Activated B cell treated with CpG ODN at 0.5 μM for 24 hours (primary cell): ENCODE measurements at regions of chr14 and their contacts with region 1.

Region 1: GRCh38 chr14:91244501-91244901 is at the start of gene GPR68:
- DNase-seq: no peak
- ATAC-seq: no peak
- H3K4me3 Mint-ChIP-seq: peak within 1 kb of the TSS; percentile 75
- H3K27ac Mint-ChIP-seq: peak within 1 kb of the TSS; percentile 91
- H3K4me1 Mint-ChIP-seq: peaks cover 61% of the 10 kb centered on the region
- H3K27me3 Mint-ChIP-seq: no peaks in the 10 kb centered on the region
- CTCF ChIP-seq: no peak
- total RNA-seq, gene GPR68: 1.4 and 1.8 TPM in 2 replicates

Region 2: DNA sequence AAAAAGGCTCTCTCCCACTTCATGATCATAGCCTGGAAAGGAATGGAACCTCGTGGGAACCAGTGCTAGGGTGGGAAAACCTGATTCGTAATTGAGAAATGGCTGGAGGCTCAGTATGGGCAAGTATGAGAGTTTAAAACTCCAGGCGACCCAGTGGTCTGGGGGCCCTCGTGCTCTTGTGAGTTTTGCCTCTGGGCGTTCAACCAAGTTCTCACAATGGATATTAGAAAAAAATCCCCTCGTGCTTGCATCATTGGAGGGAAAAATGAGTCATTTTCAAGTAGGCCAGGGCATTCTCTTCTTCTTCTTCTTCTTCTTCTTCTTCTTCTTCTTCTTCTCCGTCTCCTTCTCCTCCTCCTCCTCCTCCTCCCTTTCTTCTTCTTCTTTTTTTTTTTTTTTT is 39.0 kb before region 1 on chr14:
- CTCF ChIA-PET with region 1: no interaction called
- POLR2A ChIA-PET with region 1: no interaction called
- intact Hi-C with region 1: loop called (anchors 5 kb)
- DNase-seq: no peak
- ATAC-seq: no peak
- H3K4me3 Mint-ChIP-seq: no peak overlapping the region
- H3K27ac Mint-ChIP-seq: peak overlapping the region; percentile 37
- H3K4me1 Mint-ChIP-seq: peaks cover 2% of the 10 kb centered on the region
- H3K27me3 Mint-ChIP-seq: no peaks in the 10 kb centered on the region
- CTCF ChIP-seq: no peak

Region 3: GRCh38 chr14:91258011-91258618 is 13.6 kb after region 1 on chr14:
- CTCF ChIA-PET with region 1: interaction called, 4 read pairs
- POLR2A ChIA-PET with region 1: interaction called, 25 read pairs
- intact Hi-C with region 1: loop called (anchors 1 kb)
- DNase-seq: no peak
- ATAC-seq: no peak
- H3K4me3 Mint-ChIP-seq: no peak overlapping the region
- H3K27ac Mint-ChIP-seq: no peak overlapping the region
- H3K4me1 Mint-ChIP-seq: peaks cover 16% of the 10 kb centered on the region
- H3K27me3 Mint-ChIP-seq: no peaks in the 10 kb centered on the region
- CTCF ChIP-seq: no peak

Region 4: GRCh38 chr14:91317381-91318308 is 73.1 kb after region 1 on chr14:
- CTCF ChIA-PET with region 1: no interaction called
- POLR2A ChIA-PET with region 1: interaction called, 9 read pairs
- intact Hi-C with region 1: loop called (anchors 2 kb)
- DNase-seq: peak; percentile 62
- ATAC-seq: peak; percentile 32
- H3K4me3 Mint-ChIP-seq: peak overlapping the region; percentile 70
- H3K27ac Mint-ChIP-seq: peak overlapping the region; percentile 98
- H3K4me1 Mint-ChIP-seq: peaks cover 78% of the 10 kb centered on the region
- H3K27me3 Mint-ChIP-seq: no peaks in the 10 kb centered on the region
- CTCF ChIP-seq: no peak

Region 5: DNA sequence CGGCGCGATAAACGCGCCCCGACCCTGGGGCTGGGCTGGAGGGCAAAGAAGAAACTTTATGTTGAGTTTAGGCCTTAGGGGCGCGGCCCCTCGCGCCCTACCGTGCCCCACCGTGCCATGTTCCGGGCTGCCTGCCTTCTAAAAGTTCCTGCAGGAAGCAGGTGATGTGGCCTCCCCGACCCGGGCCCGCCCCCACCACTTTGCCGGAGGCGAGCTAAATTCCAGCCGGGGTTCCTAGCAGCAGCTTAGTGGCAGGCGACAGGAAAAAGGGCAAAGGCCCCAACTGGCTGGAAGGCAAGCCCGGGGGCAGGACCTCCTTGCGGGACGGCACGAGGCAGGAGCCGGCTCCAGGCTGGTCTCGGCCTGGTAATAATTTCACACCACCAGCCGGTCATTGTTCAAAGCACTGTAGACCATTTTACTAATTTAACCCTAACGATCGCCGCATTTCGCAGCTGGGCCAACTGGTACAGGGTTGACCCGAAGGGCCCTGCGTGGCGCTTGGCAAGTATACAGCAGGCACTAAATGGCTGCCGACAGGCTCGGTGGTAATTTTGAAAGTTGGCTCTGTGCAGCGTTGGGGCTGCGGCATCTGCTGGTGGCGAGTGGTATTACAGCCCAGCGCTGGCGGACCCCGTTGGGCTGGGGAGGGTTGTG is 174.0 kb after region 1 on chr14:
- CTCF ChIA-PET with region 1: no interaction called
- POLR2A ChIA-PET with region 1: interaction called, 3 read pairs
- intact Hi-C with region 1: loop called (anchors 1 kb)
- DNase-seq: peak; percentile 84
- ATAC-seq: peak; percentile 37
- H3K4me3 Mint-ChIP-seq: peak overlapping the region; percentile 81
- H3K27ac Mint-ChIP-seq: peak overlapping the region; percentile 93
- H3K4me1 Mint-ChIP-seq: peaks cover 42% of the 10 kb centered on the region
- H3K27me3 Mint-ChIP-seq: no peaks in the 10 kb centered on the region
- CTCF ChIP-seq: peak; percentile 36